ENCODE measurements at regions of chr7 and their contacts with region 1.

Region 1: DNA sequence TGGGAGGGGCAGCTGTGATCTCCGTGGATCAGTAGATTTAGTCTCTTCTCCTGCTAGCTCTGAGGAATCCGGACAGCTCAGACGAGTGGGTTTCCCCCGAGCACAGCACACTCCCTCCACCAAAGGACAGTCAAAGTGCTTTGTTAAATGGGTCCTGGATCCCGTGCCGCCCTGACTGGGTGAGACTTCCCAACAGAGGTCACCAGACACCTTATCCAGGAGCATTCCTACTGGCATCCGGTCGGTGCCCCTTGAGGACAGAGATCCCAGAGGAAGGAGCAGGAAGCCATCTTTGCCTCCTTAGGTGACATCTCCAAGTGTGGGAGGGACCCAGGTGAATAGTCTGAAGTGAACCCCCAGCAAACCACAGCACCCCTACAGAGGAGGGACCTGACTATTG is 1148.9 kb downstream of the CNTNAP2 start:
- DNase-seq: no peak
- H3K4me3 ChIP-seq: no peak overlapping the region
- H3K27ac ChIP-seq: no peak overlapping the region
- H3K4me1 ChIP-seq: no peaks in the 10 kb centered on the region
- H3K27me3 ChIP-seq: no peaks in the 10 kb centered on the region
- CTCF ChIP-seq: no peak

Region 2: DNA sequence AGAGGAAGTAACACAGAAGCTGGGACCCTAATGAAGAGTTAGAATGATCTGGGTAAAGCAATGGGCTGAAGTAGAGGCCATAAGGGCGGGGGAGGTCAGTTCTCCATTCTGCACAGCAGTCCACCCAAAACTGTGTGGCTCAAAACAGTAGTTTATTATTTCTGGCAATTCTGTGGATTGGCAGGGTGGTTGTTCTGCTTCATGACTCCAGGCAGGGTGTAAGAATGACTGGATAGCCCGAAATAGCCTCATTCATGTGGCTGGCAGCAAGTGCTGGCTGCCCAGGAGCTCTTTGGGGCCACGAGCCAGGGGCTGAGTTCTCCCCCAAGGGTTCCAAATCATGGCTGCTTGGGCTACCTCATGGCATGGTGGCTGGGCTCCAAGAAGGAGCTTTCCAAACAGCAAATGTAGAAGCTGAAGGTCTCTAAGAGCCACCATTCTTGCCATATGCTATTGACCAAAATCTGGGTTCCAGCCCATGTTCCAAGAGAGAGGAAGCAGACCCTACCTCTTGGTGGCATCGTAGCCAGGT is 1009.9 kb after region 1 on chr7:
- CTCF ChIA-PET with region 1: no interaction called
- POLR2A ChIA-PET with region 1: interaction called, 14 read pairs
- intact Hi-C with region 1: no loop called
- DNase-seq: no peak
- H3K4me3 ChIP-seq: no peak overlapping the region
- H3K27ac ChIP-seq: no peak overlapping the region
- H3K4me1 ChIP-seq: no peaks in the 10 kb centered on the region
- H3K27me3 ChIP-seq: peaks cover 89% of the 10 kb centered on the region
- CTCF ChIP-seq: no peak

Measured in PC-9 (cell line).